GM12878 (cell line): ENCODE measurements at regions of chr3 and their contacts with region 1.

Region 1: GRCh38 chr3:58073301-58074108 is 65.3 kb downstream of the FLNB start:
- DNase-seq: no peak
- ATAC-seq: peak; percentile 77
- H3K4me3 ChIP-seq: no peak overlapping the region; the same call in 1 of the 2 replicates
- H3K27ac ChIP-seq: peak overlapping the region; percentile 45
- H3K4me1 ChIP-seq: peaks cover 22% of the 10 kb centered on the region
- H3K27me3 ChIP-seq: no peaks in the 10 kb centered on the region
- CTCF ChIP-seq: no peak
- EP300 ChIP-seq: 0 out of 4 replicates have a peak, but pooled peaks of 1 of the 2 experiments have one; percentile 13
- POLR2A ChIP-seq: no peak
- RAD21 ChIP-seq: no peak

Region 2: DNA sequence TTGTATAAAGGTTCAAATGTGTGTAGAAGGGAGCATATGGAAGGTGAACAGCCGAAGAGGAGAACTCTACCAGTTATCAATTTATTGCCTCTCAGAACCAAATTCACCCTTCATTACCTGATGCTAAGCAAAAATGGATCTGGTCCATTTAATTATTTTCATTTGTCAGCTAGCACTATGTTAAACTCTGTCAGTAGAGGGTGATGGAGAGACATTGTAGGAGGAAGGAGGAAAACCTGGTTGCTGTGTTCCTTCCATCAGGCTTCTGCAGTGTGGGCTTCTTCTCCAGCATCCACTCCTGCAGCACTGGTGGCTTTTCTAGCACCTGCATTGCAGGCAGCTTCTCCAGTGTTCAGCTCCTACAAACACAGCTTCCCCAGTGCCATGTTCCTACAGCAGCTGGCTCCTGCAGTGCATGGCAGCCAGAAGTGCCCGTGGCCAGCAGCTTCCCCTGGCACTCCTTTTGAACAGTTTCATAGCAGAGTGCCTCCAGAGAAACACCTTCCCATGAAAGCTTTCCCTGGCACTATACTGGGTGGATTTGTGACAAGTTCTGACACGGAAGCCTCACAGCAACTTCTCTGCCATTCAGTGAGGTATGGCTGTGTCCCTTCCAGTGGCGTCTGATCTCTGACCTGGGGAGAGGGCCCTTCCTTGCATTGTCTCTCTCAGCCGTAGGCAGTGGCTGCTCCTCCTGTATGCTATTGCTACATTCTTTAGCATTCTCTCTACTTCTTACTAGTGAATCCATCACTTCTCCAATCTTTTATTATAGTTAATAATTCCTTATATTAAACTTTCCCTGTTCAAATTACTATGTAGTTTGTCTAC is 893.7 kb before region 1 on chr3:
- CTCF ChIA-PET with region 1: no interaction called
- POLR2A ChIA-PET with region 1: no interaction called
- RAD21 ChIA-PET with region 1: no interaction called
- SMC1A ChIA-PET with region 1: no interaction called
- in situ Hi-C with region 1: no loop called
- intact Hi-C with region 1: no loop called
- DNase-seq: no peak
- ATAC-seq: peak; percentile 82
- H3K4me3 ChIP-seq: no peak overlapping the region
- H3K27ac ChIP-seq: no peak overlapping the region
- H3K4me1 ChIP-seq: no peaks in the 10 kb centered on the region
- H3K27me3 ChIP-seq: no peaks in the 10 kb centered on the region
- CTCF ChIP-seq: peak; percentile 50 to 62 (median 57)
- EP300 ChIP-seq: no peak
- POLR2A ChIP-seq: no peak
- RAD21 ChIP-seq: peak; percentile 79

Region 3: GRCh38 chr3:58008140-58009025 is 65.1 kb before region 1 on chr3 and contains the start of gene FLNB:
- CTCF ChIA-PET with region 1: no interaction called
- POLR2A ChIA-PET with region 1: interaction called, 5 read pairs
- RAD21 ChIA-PET with region 1: interaction called, 35 read pairs
- SMC1A ChIA-PET with region 1: interaction called, 21 read pairs
- in situ Hi-C with region 1: no loop called
- intact Hi-C with region 1: loop called (anchors 5 kb)
- DNase-seq: no peak
- ATAC-seq: peak; percentile 81
- H3K4me3 ChIP-seq: peak within 1 kb of the TSS; percentile 77
- H3K27ac ChIP-seq: peak within 1 kb of the TSS; percentile 45
- H3K4me1 ChIP-seq: peaks cover 16% of the 10 kb centered on the region
- H3K27me3 ChIP-seq: no peaks in the 10 kb centered on the region
- CTCF ChIP-seq: peak; percentile 72 to 95 (median 90)
- EP300 ChIP-seq: no peak
- POLR2A ChIP-seq: peak; percentile 90
- RAD21 ChIP-seq: peak; percentile 91
- polyA plus RNA-seq, gene FLNB: 13.6 to 15.8 TPM

Region 4: DNA sequence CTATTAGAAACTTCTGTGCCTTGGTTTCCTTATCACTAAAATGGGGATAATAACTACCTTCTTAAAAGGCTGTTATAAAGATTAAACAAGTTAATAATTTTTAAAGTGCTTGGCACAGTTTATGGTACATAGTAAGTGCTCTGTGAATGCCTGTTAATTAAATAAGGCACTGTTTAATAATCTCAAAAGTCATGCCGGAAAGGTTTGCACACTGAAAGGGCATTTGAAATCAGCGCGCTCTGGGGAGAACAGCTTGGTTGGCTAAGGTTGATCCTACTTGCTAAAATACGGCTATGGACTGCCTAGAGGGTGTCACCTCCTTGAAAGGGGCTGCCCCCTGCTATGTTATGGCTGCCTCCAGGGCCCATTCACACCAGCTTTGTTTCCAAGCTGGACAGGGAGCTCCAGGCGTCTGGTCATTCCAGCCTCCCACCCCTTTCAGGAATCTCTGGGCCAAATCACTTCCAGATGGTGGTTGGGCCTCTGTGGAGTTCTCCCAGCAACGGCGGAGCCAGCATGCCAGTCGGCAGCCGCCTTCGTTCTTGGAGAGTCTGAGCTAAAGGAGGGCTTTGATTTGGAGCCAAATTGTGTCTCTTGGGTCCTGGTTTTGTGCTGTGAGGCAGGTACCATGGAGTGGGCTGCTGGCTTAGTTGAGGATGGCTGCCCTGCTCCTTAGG is 59.4 kb before region 1 on chr3:
- CTCF ChIA-PET with region 1: no interaction called
- POLR2A ChIA-PET with region 1: interaction called, 5 read pairs
- RAD21 ChIA-PET with region 1: interaction called, 35 read pairs
- SMC1A ChIA-PET with region 1: interaction called, 21 read pairs
- in situ Hi-C with region 1: no loop called
- intact Hi-C with region 1: loop called (anchors 5 kb)
- DNase-seq: no peak
- ATAC-seq: no peak
- H3K4me3 ChIP-seq: no peak overlapping the region
- H3K27ac ChIP-seq: no peak overlapping the region
- H3K4me1 ChIP-seq: peaks cover 16% of the 10 kb centered on the region
- H3K27me3 ChIP-seq: no peaks in the 10 kb centered on the region
- CTCF ChIP-seq: no peak
- EP300 ChIP-seq: no peak
- POLR2A ChIP-seq: no peak
- RAD21 ChIP-seq: no peak

Region 5: DNA sequence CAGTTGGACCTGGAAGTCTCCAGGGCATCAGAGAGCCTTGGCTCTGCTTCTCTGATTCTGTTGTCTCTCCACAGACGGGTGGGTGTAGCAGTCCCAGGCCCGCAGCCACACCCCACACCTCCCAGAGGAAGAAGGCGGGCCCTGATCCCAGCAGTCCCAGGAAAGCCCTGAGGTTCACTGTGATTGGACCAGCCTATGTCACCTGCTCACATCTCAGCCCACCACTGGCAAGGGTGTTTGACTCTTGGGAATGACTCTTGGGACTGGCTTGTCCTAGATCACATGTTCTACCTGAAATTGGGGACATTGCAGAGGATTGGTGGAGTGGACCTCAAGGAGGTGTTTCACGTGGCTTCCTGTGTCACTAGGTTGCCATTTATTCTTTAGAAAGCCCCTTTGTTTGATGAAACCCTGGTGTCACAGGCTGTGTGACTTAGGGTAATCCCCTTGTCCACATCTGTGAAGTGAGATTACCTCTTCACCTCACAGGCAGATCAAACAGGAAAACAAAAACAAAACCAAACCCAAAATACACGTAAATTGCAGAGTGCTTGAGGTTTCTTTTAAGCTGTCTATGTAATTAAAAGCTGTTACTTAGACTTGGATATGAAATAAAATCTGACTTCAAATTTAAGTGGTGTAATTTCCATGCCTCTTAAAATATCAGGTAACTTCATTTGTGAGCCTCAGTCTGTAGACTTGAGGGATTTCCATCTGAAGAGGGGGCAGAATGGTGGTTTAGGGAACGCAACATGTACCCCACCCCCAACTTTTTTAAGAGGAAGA is 38.6 kb before region 1 on chr3:
- CTCF ChIA-PET with region 1: interaction called, 10 read pairs
- POLR2A ChIA-PET with region 1: interaction called, 4 read pairs
- RAD21 ChIA-PET with region 1: interaction called, 28 read pairs
- SMC1A ChIA-PET with region 1: interaction called, 33 read pairs
- in situ Hi-C with region 1: no loop called
- intact Hi-C with region 1: no loop called
- DNase-seq: peak; percentile 96
- ATAC-seq: peak; percentile 96
- H3K4me3 ChIP-seq: peak overlapping the region; percentile 8; the same call in 1 of the 2 replicates
- H3K27ac ChIP-seq: peak overlapping the region; percentile 85
- H3K4me1 ChIP-seq: peaks cover 44% of the 10 kb centered on the region
- H3K27me3 ChIP-seq: no peaks in the 10 kb centered on the region
- CTCF ChIP-seq: no peak
- EP300 ChIP-seq: peak; percentile 92 to 96
- POLR2A ChIP-seq: no peak
- RAD21 ChIP-seq: no peak

Region 6: GRCh38 chr3:58041654-58042324 is 31.7 kb before region 1 on chr3:
- CTCF ChIA-PET with region 1: interaction called, 5 read pairs
- POLR2A ChIA-PET with region 1: interaction called, 4 read pairs
- RAD21 ChIA-PET with region 1: interaction called, 28 read pairs
- SMC1A ChIA-PET with region 1: interaction called, 33 read pairs
- in situ Hi-C with region 1: no loop called
- intact Hi-C with region 1: no loop called
- DNase-seq: peak; percentile 88
- ATAC-seq: peak; percentile 88
- H3K4me3 ChIP-seq: no peak overlapping the region
- H3K27ac ChIP-seq: peak overlapping the region; percentile 34; the same call in 1 of the 2 replicates
- H3K4me1 ChIP-seq: peaks cover 57% of the 10 kb centered on the region
- H3K27me3 ChIP-seq: no peaks in the 10 kb centered on the region
- CTCF ChIP-seq: no peak
- EP300 ChIP-seq: peak; percentile 72 to 86
- POLR2A ChIP-seq: no peak
- RAD21 ChIP-seq: no peak

Region 7: DNA sequence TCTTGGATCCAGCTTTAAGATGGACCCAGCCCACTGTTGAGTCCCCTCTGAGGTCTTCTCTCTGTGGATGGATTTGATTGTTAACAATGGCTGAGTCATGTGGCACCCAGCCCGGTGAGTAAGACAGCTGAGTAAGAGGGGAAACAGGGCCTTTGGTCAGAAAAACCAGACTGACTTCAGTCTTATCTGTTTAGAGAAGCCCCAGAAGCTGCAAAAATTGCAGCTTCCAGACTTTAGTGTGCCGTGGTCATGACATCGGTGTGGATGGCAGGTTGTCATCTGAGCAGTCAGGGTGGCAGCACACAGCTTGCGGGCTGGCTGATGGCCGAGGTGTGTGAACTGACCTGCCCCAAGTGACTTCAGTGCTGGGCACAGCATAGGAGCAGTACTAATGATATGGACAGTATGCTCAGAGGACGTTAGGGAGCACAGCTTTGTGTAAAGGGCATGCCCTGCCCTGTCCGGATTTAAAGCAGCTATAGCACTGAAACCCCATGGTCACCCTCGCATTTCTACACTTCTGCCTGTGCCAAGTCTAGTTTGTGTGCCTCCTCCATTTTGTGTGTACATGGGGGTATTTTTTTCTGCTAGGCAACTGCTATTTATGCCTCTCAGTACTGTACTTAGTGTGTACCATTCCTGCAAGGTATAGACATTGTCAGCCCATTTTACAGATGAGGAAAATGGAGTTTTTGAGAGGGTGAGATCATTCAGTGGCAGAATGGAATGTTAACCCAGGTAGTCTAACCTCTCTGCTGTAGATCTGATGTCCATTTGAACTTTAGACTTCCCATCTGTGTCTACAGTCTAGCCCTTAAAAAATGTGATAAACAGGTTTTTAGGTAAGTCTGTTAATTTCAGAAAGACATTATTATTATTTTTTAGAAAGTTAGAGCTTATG is 20.9 kb before region 1 on chr3:
- CTCF ChIA-PET with region 1: interaction called, 7 read pairs
- POLR2A ChIA-PET with region 1: interaction called, 5 read pairs
- RAD21 ChIA-PET with region 1: interaction called, 7 read pairs
- SMC1A ChIA-PET with region 1: interaction called, 17 read pairs
- in situ Hi-C with region 1: no loop called
- intact Hi-C with region 1: no loop called
- DNase-seq: no peak
- ATAC-seq: peak; percentile 78
- H3K4me3 ChIP-seq: no peak overlapping the region
- H3K27ac ChIP-seq: no peak overlapping the region
- H3K4me1 ChIP-seq: no peaks in the 10 kb centered on the region
- H3K27me3 ChIP-seq: no peaks in the 10 kb centered on the region
- CTCF ChIP-seq: no peak
- EP300 ChIP-seq: no peak
- POLR2A ChIP-seq: no peak
- RAD21 ChIP-seq: no peak

Region 8: GRCh38 chr3:58059349-58060321 is 13.9 kb before region 1 on chr3:
- CTCF ChIA-PET with region 1: interaction called, 4 read pairs
- POLR2A ChIA-PET with region 1: interaction called, 5 read pairs
- RAD21 ChIA-PET with region 1: interaction called, 3 read pairs
- SMC1A ChIA-PET with region 1: interaction called, 11 read pairs
- in situ Hi-C with region 1: no loop called
- intact Hi-C with region 1: no loop called
- DNase-seq: no peak
- ATAC-seq: no peak
- H3K4me3 ChIP-seq: no peak overlapping the region
- H3K27ac ChIP-seq: no peak overlapping the region
- H3K4me1 ChIP-seq: no peaks in the 10 kb centered on the region
- H3K27me3 ChIP-seq: no peaks in the 10 kb centered on the region
- CTCF ChIP-seq: no peak
- EP300 ChIP-seq: no peak
- POLR2A ChIP-seq: no peak
- RAD21 ChIP-seq: no peak

Region 9: GRCh38 chr3:58471025-58471887 is 397.8 kb after region 1 on chr3:
- CTCF ChIA-PET with region 1: no interaction called
- POLR2A ChIA-PET with region 1: no interaction called
- RAD21 ChIA-PET with region 1: no interaction called
- SMC1A ChIA-PET with region 1: no interaction called
- in situ Hi-C with region 1: no loop called
- intact Hi-C with region 1: no loop called
- DNase-seq: no peak
- ATAC-seq: peak; percentile 45
- H3K4me3 ChIP-seq: no peak overlapping the region
- H3K27ac ChIP-seq: no peak overlapping the region
- H3K4me1 ChIP-seq: peaks cover 6% of the 10 kb centered on the region; the same call in 1 of the 2 replicates
- H3K27me3 ChIP-seq: no peaks in the 10 kb centered on the region
- CTCF ChIP-seq: no peak
- EP300 ChIP-seq: no peak
- POLR2A ChIP-seq: no peak
- RAD21 ChIP-seq: no peak

Region 10: GRCh38 chr3:58998476-58999117 is 925.1 kb after region 1 on chr3:
- CTCF ChIA-PET with region 1: no interaction called
- POLR2A ChIA-PET with region 1: no interaction called
- RAD21 ChIA-PET with region 1: no interaction called
- SMC1A ChIA-PET with region 1: no interaction called
- in situ Hi-C with region 1: no loop called
- intact Hi-C with region 1: no loop called
- DNase-seq: no peak
- ATAC-seq: peak; percentile 79
- H3K4me3 ChIP-seq: no peak overlapping the region
- H3K27ac ChIP-seq: no peak overlapping the region
- H3K4me1 ChIP-seq: no peaks in the 10 kb centered on the region
- H3K27me3 ChIP-seq: no peaks in the 10 kb centered on the region
- CTCF ChIP-seq: no peak
- EP300 ChIP-seq: no peak
- POLR2A ChIP-seq: no peak
- RAD21 ChIP-seq: no peak